Head of caudate nucleus (tissue), 42 donors: ENCODE measurements at regions of chr5 and their contacts with region 1.

Region 1: GRCh38 chr5:671459-672328 is 21.5 kb downstream of the TPPP start:
- DNase-seq: peak; percentile 75 to 95 (median 86)

Region 2: GRCh38 chr5:392431-392988 is 279.2 kb before region 1 on chr5:
- intact Hi-C with region 1: no loop called
- DNase-seq: peak in 13 of 42 donors; percentile 2 to 30 (median 11)

Region 3: DNA sequence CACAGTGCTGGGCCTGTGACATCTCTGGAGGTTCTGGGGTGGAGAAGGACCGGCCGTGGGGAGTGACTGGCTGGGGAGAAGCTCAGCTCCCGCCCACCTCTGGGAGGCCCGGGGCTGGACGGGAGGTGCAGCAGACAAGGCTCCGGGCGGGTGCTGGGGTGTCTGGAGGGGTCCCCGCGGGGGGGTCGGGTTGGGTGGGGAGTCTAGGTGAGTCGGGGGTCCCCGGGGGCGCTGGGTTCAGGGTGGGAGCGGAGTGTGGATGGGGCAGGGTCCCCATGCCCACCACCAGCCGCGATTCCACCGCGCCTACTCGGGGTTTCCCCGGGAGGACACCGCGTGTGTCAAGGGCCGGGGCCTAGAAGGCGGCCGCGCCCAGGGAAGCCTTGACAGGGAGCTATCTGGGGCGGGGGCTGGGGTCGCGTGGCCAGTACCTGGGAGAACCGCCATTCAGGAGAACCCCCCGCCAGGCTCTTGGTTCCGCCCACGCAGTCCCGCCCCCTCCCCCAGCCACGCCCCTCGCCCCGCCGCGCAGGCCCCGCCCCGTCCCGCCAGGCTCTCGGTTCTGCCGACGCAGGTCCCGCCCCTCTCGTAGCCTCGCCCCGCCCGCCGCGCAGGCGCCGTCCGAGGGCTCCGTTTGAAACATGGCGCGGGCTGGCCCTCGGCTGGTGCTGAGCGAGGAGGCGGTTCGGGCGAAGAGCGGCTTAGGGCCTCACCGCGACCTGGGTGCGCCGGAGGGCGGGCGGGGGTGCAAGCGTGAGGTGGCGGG is 59.8 kb before region 1 on chr5 and contains the start of gene CEP72:
- intact Hi-C with region 1: loop called (anchors 10 kb)
- DNase-seq: peak; percentile 76 to 97 (median 94)

Region 4: GRCh38 chr5:902129-902916 is 230.6 kb after region 1 on chr5:
- intact Hi-C with region 1: loop called (anchors 5 kb)
- DNase-seq: peak in 5 of 42 donors; percentile 1 to 28 (median 12)